Right ventricle myocardium inferior (tissue), 1 donor: ENCODE measurements at regions of chr6 and their contacts with region 1.

Region 1: DNA sequence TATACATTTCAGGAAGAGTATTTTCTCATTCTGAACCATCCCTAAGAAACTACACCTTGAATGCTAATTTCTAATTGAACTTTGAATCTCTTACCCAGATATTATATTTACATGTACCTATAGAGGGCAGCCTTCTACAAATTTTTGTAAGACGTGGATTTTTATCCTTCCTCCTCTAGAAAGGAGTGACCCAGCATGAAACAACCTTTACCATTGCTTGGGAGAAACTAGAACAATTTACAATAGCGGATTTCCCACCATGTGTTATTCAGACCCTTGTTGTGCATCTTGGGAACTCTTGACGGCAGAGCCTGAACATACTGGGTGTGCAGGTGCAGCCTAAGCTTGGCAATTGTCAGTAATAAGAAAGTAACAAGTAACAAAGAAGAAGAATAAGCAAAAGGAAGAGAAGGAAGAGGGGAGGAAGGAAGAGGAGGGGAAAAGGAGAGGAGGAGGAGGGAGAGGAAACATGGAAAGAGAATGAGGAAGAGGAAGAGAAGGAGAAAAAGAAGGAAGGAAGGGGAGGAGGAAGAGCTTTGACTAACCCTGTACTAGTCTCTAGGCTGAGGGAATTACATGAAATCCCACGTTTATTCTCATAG is 10.8 kb upstream of the TAAR1 start:
- DNase-seq: no peak
- ATAC-seq: peak; percentile 39

Region 2: GRCh38 chr6:132763269-132763668 is 93.5 kb after region 1 on chr6:
- intact Hi-C with region 1: loop called (anchors 5 kb)
- DNase-seq: no peak
- ATAC-seq: peak; percentile 74